WTC11 (cell line): ENCODE measurements at regions of chr2 and their contacts with region 1.

Region 1: GRCh38 chr2:166375736-166376487 is at the start of gene SCN9A:
- DNase-seq: peak; percentile 89
- ATAC-seq: peak; percentile 89
- H3K4me3 Mint-ChIP-seq: peak within 1 kb of the TSS; percentile 92
- H3K27ac Mint-ChIP-seq: peak within 1 kb of the TSS; percentile 66
- H3K4me1 Mint-ChIP-seq: peaks cover 42% of the 10 kb centered on the region
- H3K27me3 Mint-ChIP-seq: no peaks in the 10 kb centered on the region
- CTCF ChIP-seq: no peak
- total RNA-seq, gene SCN9A: 7.3 to 9.8 TPM (median 8.2 TPM) in 3 replicates

Region 2: GRCh38 chr2:166361351-166362153 is 14.4 kb before region 1 on chr2:
- CTCF ChIA-PET with region 1: interaction called, 13 read pairs
- POLR2A ChIA-PET with region 1: no interaction called
- DNase-seq: no peak
- ATAC-seq: peak; percentile 82
- H3K4me3 Mint-ChIP-seq: no peak overlapping the region
- H3K27ac Mint-ChIP-seq: no peak overlapping the region
- H3K4me1 Mint-ChIP-seq: peaks cover 16% of the 10 kb centered on the region
- H3K27me3 Mint-ChIP-seq: no peaks in the 10 kb centered on the region
- CTCF ChIP-seq: no peak

Region 3: DNA sequence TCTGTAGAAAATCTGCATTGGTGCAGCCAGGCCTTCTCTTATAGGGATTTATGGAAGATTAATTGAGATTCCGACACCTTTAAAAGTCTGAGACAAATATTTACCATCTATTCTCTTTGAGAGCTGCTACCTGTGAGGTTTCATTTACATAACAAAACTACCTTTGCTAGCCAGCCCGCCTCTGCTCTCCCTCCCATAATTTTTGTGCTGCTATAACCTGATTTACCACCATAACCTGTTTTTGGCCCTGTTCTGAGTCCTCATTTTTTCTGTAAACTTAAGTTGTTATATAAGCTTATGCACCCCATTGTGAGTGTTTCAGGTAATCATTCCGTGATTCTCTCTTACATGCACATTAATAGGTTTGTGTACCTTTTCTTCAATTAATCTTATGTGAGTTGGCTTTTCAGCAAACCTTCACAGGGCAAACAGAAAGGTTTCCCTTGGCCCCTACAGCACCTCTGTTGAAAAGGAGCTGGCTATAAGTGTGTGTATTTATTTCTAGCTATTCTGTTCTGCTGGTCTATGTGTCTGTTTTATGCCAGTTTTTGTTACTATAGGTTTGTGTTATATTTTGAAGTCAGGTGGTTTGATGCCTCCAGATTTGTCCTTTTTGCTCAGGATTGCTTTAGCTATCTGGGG is 397.5 kb after region 1 on chr2:
- CTCF ChIA-PET with region 1: no interaction called
- POLR2A ChIA-PET with region 1: no interaction called
- DNase-seq: no peak
- ATAC-seq: peak; percentile 90
- H3K4me3 Mint-ChIP-seq: peak overlapping the region; percentile 42
- H3K27ac Mint-ChIP-seq: peak overlapping the region; percentile 80
- H3K4me1 Mint-ChIP-seq: peaks cover 51% of the 10 kb centered on the region
- H3K27me3 Mint-ChIP-seq: no peaks in the 10 kb centered on the region
- CTCF ChIP-seq: no peak